ENCODE measurements at regions of chr13 and their contacts with region 1.

Region 1: GRCh38 chr13:44435142-44435982 is 61.7 kb downstream of the SERP2 start:
- DNase-seq: peak; percentile 94
- ATAC-seq: peak; percentile 91
- H3K4me3 ChIP-seq: peak overlapping the region; percentile 52 to 90 (median 71)
- H3K4me3 Mint-ChIP-seq: peak overlapping the region; percentile 89
- H3K27ac ChIP-seq: peak overlapping the region; percentile 69 to 81
- H3K27ac Mint-ChIP-seq: peak overlapping the region; percentile 84
- H3K4me1 ChIP-seq: peaks cover 22 to 30% of the 10 kb centered on the region in 2 donors
- H3K4me1 Mint-ChIP-seq: peaks cover 29% of the 10 kb centered on the region
- H3K27me3 ChIP-seq: peaks cover 0 to 16% (median 0%) of the 10 kb centered on the region in 4 experiments
- H3K27me3 Mint-ChIP-seq: peaks cover 11% of the 10 kb centered on the region
- CTCF ChIP-seq: no peak

Region 2: GRCh38 chr13:43878892-43879754 is 556.2 kb before region 1 on chr13 and contains the start of gene CCDC122:
- CTCF ChIA-PET with region 1: interaction called, 3 read pairs
- POLR2A ChIA-PET with region 1: no interaction called
- intact Hi-C with region 1: loop called (anchors 1 kb)
- DNase-seq: peak; percentile 89
- ATAC-seq: peak; percentile 79
- H3K4me3 ChIP-seq: peak within 1 kb of the TSS; percentile 36 to 78 (median 75)
- H3K4me3 Mint-ChIP-seq: peak within 1 kb of the TSS; percentile 88
- H3K27ac ChIP-seq: peak within 1 kb of the TSS; percentile 76 to 92
- H3K27ac Mint-ChIP-seq: peak within 1 kb of the TSS; percentile 94
- H3K4me1 ChIP-seq: peaks cover 20 to 22% of the 10 kb centered on the region in 2 donors
- H3K4me1 Mint-ChIP-seq: peaks cover 31% of the 10 kb centered on the region
- H3K27me3 ChIP-seq: no peaks in the 10 kb centered on the region
- H3K27me3 Mint-ChIP-seq: no peaks in the 10 kb centered on the region
- CTCF ChIP-seq: no peak
- total RNA-seq, gene CCDC122: 10.7 and 12.1 TPM in 2 replicates

Region 3: GRCh38 chr13:44050450-44051063 is 384.8 kb before region 1 on chr13:
- CTCF ChIA-PET with region 1: interaction called, 48 read pairs
- POLR2A ChIA-PET with region 1: no interaction called
- intact Hi-C with region 1: loop called (anchors 1 kb)
- DNase-seq: peak; percentile 50
- ATAC-seq: peak; percentile 31
- H3K4me3 ChIP-seq: no peak overlapping the region
- H3K4me3 Mint-ChIP-seq: no peak overlapping the region
- H3K27ac ChIP-seq: no peak overlapping the region
- H3K27ac Mint-ChIP-seq: no peak overlapping the region
- H3K4me1 ChIP-seq: no peaks in the 10 kb centered on the region
- H3K4me1 Mint-ChIP-seq: no peaks in the 10 kb centered on the region
- H3K27me3 ChIP-seq: peaks cover 0 to 4% (median 2%) of the 10 kb centered on the region in 4 experiments
- H3K27me3 Mint-ChIP-seq: peaks cover 46% of the 10 kb centered on the region
- CTCF ChIP-seq: peak; percentile 91

Region 4: DNA sequence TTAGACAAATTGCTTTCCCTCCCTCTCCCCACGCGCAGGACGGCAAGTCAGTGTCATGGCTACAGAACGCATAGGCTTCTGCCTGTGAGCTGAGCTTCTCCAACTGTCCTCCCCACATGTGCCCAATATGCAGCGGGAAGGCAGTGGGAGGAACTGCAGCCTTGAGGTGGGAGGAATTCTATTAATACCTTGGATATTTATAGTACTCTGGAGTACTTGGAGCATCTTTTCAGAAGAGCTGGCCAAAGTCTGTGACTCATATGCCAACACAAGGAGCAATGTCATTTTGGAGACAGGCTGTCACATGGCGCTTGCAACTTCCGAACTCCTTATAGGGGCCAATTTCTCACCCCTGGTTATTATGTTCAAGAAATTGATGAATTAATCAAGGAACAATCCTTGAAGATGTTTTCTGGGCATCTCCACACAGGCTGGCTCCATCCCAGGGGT is 306.8 kb before region 1 on chr13:
- CTCF ChIA-PET with region 1: no interaction called
- POLR2A ChIA-PET with region 1: no interaction called
- intact Hi-C with region 1: no loop called
- DNase-seq: no peak
- ATAC-seq: no peak
- H3K4me3 ChIP-seq: no peak overlapping the region
- H3K4me3 Mint-ChIP-seq: no peak overlapping the region
- H3K27ac ChIP-seq: no peak overlapping the region
- H3K27ac Mint-ChIP-seq: no peak overlapping the region
- H3K4me1 ChIP-seq: no peaks in the 10 kb centered on the region
- H3K4me1 Mint-ChIP-seq: no peaks in the 10 kb centered on the region
- H3K27me3 ChIP-seq: peaks cover 0 to 3% (median 0%) of the 10 kb centered on the region in 4 experiments
- H3K27me3 Mint-ChIP-seq: peaks cover 13% of the 10 kb centered on the region
- CTCF ChIP-seq: no peak

Region 5: DNA sequence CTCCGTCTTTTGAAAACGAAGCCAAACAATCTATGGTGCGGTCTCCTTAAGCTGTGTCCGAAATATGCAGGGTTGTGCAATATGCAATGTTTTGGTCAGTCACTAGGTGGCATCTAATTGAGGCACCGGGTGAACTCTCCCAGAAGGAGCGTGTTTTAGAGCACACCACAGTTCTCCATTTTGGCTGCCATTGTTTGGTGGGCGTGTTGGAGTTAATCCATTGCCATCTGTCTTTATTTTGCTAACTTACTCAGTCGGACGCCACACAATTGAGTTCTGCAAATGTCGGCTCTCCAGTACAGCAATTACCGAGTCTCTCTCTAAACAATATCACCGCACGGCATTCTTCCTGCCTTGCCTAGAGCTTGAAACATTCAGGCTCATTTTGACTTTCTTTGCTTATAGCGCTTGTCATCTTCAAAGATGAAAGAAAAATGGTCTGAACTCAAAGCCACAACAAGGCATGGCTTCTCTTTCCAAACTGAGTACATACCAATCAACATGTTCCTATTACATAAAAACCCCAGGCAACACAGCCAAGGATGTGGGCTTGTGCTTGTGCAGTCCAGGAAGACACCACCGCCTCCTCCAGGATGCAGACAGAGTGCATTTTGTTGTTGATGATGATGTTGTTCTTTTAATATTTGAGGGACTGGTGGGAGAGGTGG is 243.7 kb before region 1 on chr13:
- CTCF ChIA-PET with region 1: interaction called, 13 read pairs
- POLR2A ChIA-PET with region 1: no interaction called
- intact Hi-C with region 1: no loop called
- DNase-seq: peak; percentile 47
- ATAC-seq: peak; percentile 45
- H3K4me3 ChIP-seq: no peak overlapping the region
- H3K4me3 Mint-ChIP-seq: no peak overlapping the region
- H3K27ac ChIP-seq: no peak overlapping the region
- H3K27ac Mint-ChIP-seq: no peak overlapping the region
- H3K4me1 ChIP-seq: no peaks in the 10 kb centered on the region
- H3K4me1 Mint-ChIP-seq: no peaks in the 10 kb centered on the region
- H3K27me3 ChIP-seq: no peaks in the 10 kb centered on the region
- H3K27me3 Mint-ChIP-seq: peaks cover 16% of the 10 kb centered on the region
- CTCF ChIP-seq: peak; percentile 54

Region 6: GRCh38 chr13:44259045-44260027 is 176.0 kb before region 1 on chr13:
- CTCF ChIA-PET with region 1: interaction called, 3 read pairs
- POLR2A ChIA-PET with region 1: no interaction called
- intact Hi-C with region 1: loop called (anchors 1 kb)
- DNase-seq: peak; percentile 88
- ATAC-seq: peak; percentile 94
- H3K4me3 ChIP-seq: peak overlapping the region in 4 of 5 experiments; percentile 0 to 37 (median 16)
- H3K4me3 Mint-ChIP-seq: peak overlapping the region; percentile 89
- H3K27ac ChIP-seq: peak overlapping the region; percentile 52 to 67
- H3K27ac Mint-ChIP-seq: peak overlapping the region; percentile 91
- H3K4me1 ChIP-seq: peaks cover 19 to 22% of the 10 kb centered on the region in 2 donors
- H3K4me1 Mint-ChIP-seq: peaks cover 24% of the 10 kb centered on the region
- H3K27me3 ChIP-seq: no peaks in the 10 kb centered on the region
- H3K27me3 Mint-ChIP-seq: peaks cover under 1% of the 10 kb centered on the region
- CTCF ChIP-seq: no peak

Region 7: DNA sequence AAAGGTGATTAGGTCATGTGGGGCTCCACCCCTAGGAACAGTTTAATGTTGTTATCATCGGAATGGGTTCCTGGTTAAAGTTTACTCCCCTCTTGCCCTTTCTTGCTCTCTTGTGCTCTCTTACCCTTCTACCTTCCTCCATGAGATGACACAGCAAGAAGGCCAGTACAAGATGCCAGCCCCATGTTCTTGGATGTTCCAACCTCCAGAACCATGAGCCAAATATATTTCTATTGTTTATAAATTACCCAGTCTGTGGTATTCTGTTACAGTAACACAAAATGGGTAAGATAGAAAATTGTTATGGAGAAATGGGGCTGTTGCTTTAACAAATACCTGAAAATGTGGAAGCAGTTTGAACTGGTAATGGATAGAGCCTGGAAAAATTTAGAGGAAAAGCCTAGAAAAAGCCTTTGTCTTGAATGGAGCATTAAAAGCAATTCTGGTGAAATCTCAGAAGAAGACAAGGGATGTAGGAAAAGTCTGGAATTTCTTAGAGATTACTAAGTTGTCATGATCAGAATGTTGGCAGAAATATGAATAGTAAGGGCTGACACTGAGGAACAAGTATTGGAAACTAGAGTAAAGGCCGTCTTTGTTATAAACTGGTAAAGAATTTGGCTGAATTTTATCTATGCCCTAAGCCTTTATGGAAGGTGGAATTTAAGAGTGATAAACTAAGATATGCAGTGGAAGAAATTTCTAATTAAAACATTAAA is 194.3 kb after region 1 on chr13:
- CTCF ChIA-PET with region 1: no interaction called
- POLR2A ChIA-PET with region 1: no interaction called
- intact Hi-C with region 1: no loop called
- DNase-seq: no peak
- ATAC-seq: no peak
- H3K4me3 ChIP-seq: no peak overlapping the region
- H3K4me3 Mint-ChIP-seq: no peak overlapping the region
- H3K27ac ChIP-seq: no peak overlapping the region
- H3K27ac Mint-ChIP-seq: no peak overlapping the region
- H3K4me1 ChIP-seq: no peaks in the 10 kb centered on the region
- H3K4me1 Mint-ChIP-seq: no peaks in the 10 kb centered on the region
- H3K27me3 ChIP-seq: peaks cover 0 to 2% (median 0%) of the 10 kb centered on the region in 4 experiments
- H3K27me3 Mint-ChIP-seq: peaks cover 21% of the 10 kb centered on the region
- CTCF ChIP-seq: no peak

Region 8: GRCh38 chr13:45575146-45575829 is 1139.9 kb after region 1 on chr13:
- CTCF ChIA-PET with region 1: no interaction called
- POLR2A ChIA-PET with region 1: no interaction called
- intact Hi-C with region 1: no loop called
- DNase-seq: no peak
- ATAC-seq: no peak
- H3K4me3 ChIP-seq: no peak overlapping the region
- H3K4me3 Mint-ChIP-seq: no peak overlapping the region
- H3K27ac ChIP-seq: no peak overlapping the region
- H3K27ac Mint-ChIP-seq: no peak overlapping the region
- H3K4me1 ChIP-seq: no peaks in the 10 kb centered on the region
- H3K4me1 Mint-ChIP-seq: no peaks in the 10 kb centered on the region
- H3K27me3 ChIP-seq: peaks cover 0 to 4% (median 1%) of the 10 kb centered on the region in 4 experiments
- H3K27me3 Mint-ChIP-seq: peaks cover 26% of the 10 kb centered on the region
- CTCF ChIP-seq: no peak

Measured in B cell (primary cell).